Activated T-helper 1 cell treated with anti-CD3 and anti-CD28 coated beads, Interleukin-12 subunit alpha, Interleukin-12 subunit beta, Interleukin-2, Interleukin-4 antibody, amounts not matched to agents 30 ng/mL and 10 ng/mL and 1 ng/mL, durations not matched to agents 14 hours and 24 hours and 36 hours (primary cell): ENCODE measurements at regions of chr6 and their contacts with region 1.

Region 1: GRCh38 chr6:134436281-134436815 is 118.4 kb upstream of the SGK1 start:
- DNase-seq: peak; percentile 74
- H3K4me3 Mint-ChIP-seq: peak overlapping the region; percentile 55
- H3K27ac Mint-ChIP-seq: peak overlapping the region; percentile 99
- H3K4me1 Mint-ChIP-seq: peaks cover 41% of the 10 kb centered on the region
- H3K27me3 Mint-ChIP-seq: no peaks in the 10 kb centered on the region

Region 2: GRCh38 chr6:134235937-134236751 is 200.2 kb before region 1 on chr6:
- intact Hi-C with region 1: loop called (anchors 1 kb)
- DNase-seq: no peak
- H3K4me3 Mint-ChIP-seq: peak overlapping the region; percentile 17
- H3K27ac Mint-ChIP-seq: peak overlapping the region; percentile 85
- H3K4me1 Mint-ChIP-seq: peaks cover 52% of the 10 kb centered on the region
- H3K27me3 Mint-ChIP-seq: no peaks in the 10 kb centered on the region

Region 3: GRCh38 chr6:134352786-134353480 is 83.4 kb before region 1 on chr6:
- intact Hi-C with region 1: loop called (anchors 1 kb)
- DNase-seq: no peak
- H3K4me3 Mint-ChIP-seq: peak overlapping the region; percentile 77
- H3K27ac Mint-ChIP-seq: peak overlapping the region; percentile 49
- H3K4me1 Mint-ChIP-seq: peaks cover 30% of the 10 kb centered on the region
- H3K27me3 Mint-ChIP-seq: no peaks in the 10 kb centered on the region

Region 4: DNA sequence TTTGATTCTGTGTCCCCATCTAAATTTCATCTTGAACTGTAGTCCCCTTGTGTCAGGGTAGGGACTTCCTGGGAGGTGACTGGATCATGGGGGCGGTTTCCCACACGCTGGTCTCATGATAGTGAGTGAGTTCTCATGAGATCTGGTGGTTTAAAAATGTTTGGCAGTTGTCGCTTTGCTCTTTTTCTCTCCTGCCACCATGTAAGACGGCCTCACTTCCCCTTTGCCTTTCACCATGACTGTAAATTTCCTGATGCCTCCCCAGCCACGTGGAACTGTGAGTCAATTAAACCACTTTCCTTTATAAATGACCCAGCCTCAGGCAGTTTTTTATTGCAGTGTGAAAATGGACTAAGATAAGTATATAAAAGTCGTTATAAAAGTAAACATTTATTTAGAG is 37.9 kb before region 1 on chr6:
- intact Hi-C with region 1: loop called (anchors 2 kb)
- DNase-seq: no peak
- H3K4me3 Mint-ChIP-seq: no peak overlapping the region
- H3K27ac Mint-ChIP-seq: peak overlapping the region; percentile 21
- H3K4me1 Mint-ChIP-seq: peaks cover 26% of the 10 kb centered on the region
- H3K27me3 Mint-ChIP-seq: peaks cover 2% of the 10 kb centered on the region

Region 5: DNA sequence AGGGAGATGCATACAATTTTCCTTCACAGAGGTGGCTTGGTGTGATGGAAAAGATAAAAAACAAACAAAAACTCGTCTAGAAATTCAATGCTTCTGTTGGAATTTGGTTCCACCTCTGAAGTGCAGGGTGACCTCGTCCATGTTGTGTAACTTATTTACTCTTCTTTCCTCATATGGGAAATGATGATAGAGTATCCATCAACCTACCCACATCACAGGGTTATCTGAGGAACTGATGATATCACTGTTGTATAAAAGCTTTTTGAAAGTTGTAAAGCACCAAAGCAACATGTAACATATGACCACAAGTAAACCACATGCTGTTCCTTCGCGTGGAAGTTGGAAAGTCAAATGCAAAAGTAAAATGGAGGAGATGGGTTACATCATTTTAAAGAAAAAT is 93.6 kb after region 1 on chr6:
- intact Hi-C with region 1: loop called (anchors 5 kb)
- DNase-seq: no peak
- H3K4me3 Mint-ChIP-seq: no peak overlapping the region
- H3K27ac Mint-ChIP-seq: peak overlapping the region; percentile 33
- H3K4me1 Mint-ChIP-seq: peaks cover 72% of the 10 kb centered on the region
- H3K27me3 Mint-ChIP-seq: no peaks in the 10 kb centered on the region

Region 6: DNA sequence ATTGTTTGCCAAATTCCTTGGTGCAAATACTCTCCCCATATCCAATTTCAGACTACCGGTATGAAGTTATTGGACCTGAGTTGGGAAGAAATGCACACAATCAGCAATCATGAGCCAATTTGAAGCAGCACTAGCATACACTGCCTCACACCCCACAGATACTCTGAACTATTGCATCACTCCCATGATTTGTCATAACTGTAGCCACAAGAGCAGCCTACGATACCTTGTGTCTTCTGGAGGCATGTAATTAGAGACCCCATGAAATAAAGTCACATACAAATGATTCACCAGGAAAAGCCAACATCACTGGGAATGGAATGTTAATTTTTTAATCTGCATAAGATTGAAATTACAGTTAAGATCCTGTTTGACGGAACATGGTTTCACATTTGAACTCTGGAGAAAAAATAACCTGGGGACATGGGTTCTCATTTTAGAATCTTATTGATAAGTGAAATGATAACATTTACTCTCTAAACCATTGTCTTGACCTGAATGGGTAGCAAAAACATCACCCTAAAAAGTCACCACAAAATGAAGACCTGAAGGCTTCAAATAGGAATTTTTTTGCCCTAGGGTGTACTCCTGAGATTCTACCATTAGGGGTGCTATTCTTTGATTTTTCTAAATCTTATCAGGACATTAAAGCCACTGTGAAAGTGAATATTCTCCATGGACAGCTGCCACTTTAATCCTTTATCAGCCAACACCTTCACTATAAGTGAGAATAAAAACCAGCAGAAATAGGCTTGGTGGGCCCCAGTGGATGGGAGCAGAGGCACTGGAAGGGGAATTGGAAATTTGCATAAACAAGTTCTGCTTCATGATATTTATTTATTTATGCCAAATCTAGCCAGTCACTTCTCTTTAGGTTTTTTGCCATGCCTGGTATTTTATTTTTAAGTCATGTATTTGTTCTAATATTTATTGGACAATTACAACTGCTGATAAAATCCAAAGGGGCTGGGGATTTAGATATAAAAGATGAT is 652.8 kb after region 1 on chr6:
- intact Hi-C with region 1: loop called (anchors 2 kb)
- DNase-seq: peak; percentile 58
- H3K4me3 Mint-ChIP-seq: peak overlapping the region; percentile 57
- H3K27ac Mint-ChIP-seq: peak overlapping the region; percentile 93
- H3K4me1 Mint-ChIP-seq: peaks cover 89% of the 10 kb centered on the region
- H3K27me3 Mint-ChIP-seq: no peaks in the 10 kb centered on the region

Region 7: GRCh38 chr6:135162678-135163439 is 726.5 kb after region 1 on chr6:
- intact Hi-C with region 1: loop called (anchors 2 kb)
- DNase-seq: no peak
- H3K4me3 Mint-ChIP-seq: peak overlapping the region; percentile 53
- H3K27ac Mint-ChIP-seq: peak overlapping the region; percentile 87
- H3K4me1 Mint-ChIP-seq: peaks cover 83% of the 10 kb centered on the region
- H3K27me3 Mint-ChIP-seq: no peaks in the 10 kb centered on the region